Heart left ventricle (tissue), 16 donors: ENCODE measurements at regions of chr17 and their contacts with region 1.

Region 1: GRCh38 chr17:64515419-64515818 is 8.6 kb downstream of the CEP95 start:
- DNase-seq: no peak
- ATAC-seq: no peak
- H3K4me3 ChIP-seq: no peak overlapping the region
- H3K27ac ChIP-seq: no peak overlapping the region
- H3K4me1 ChIP-seq: no peaks in the 10 kb centered on the region
- H3K27me3 ChIP-seq: no peaks in the 10 kb centered on the region
- CTCF ChIP-seq: no peak
- POLR2A ChIP-seq: no peak

Region 2: DNA sequence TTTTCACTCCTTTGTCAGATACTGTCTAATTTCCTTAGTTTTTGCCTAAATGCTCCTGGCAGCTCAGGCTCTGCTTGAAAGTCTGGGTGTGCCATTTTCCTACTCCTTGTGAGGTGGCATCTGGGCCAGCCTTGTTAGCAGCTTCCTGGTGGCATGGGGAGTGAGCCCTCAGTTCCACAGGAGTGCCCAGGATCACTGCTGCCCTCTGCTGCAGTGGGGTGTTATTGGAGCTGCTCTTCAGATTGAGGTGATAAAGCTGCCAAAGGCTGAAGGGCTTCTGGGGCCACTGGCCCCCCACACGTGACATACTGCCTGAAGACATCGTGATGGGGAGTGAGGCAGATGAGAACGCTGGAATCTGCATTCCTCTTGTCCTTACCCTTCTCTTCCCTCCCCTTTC is 18.8 kb after region 1 on chr17:
- intact Hi-C with region 1: no loop called
- DNase-seq: no peak
- ATAC-seq: no peak
- H3K4me3 ChIP-seq: no peak overlapping the region
- H3K27ac ChIP-seq: no peak overlapping the region
- H3K4me1 ChIP-seq: peaks cover 0 to 7% (median 0%) of the 10 kb centered on the region in 12 donors
- H3K27me3 ChIP-seq: no peaks in the 10 kb centered on the region
- CTCF ChIP-seq: no peak
- POLR2A ChIP-seq: no peak

Region 3: DNA sequence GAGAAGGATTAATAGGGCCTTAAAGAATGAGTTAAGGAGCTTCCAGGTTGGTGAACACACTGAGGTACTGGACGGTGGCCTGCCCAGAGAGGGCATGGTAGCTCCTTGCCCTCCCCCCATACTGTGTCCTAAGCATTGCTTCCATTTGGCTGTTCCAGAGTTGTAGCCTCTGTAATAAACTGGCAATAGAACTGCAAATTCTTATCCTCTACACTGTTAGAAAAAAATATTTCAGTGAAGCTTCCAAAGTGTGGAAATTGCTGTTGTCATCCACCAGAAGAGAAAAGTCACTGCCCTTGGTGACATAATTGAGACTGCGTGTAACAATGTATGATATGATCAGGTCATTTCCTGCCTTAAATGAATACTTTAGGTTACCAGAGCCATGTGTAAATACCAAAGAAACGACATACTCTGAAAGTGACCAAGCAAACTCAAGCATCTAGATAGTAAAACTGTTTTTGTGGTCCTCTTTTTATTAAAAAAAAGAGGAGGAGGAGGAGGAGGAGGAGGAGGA is 57.3 kb after region 1 on chr17:
- intact Hi-C with region 1: loop called in 1 of 10 experiments (anchors 10 kb)
- DNase-seq: no peak
- ATAC-seq: peak in 3 of 4 donors; percentile 14 to 70 (median 42)
- H3K4me3 ChIP-seq: no peak overlapping the region
- H3K27ac ChIP-seq: peak overlapping the region in 4 of 12 donors; percentile 2 to 51 (median 34)
- H3K4me1 ChIP-seq: peaks cover 0 to 12% (median 2%) of the 10 kb centered on the region in 12 donors
- H3K27me3 ChIP-seq: no peaks in the 10 kb centered on the region
- CTCF ChIP-seq: no peak
- POLR2A ChIP-seq: no peak